B cell (primary cell): ENCODE measurements at regions of chr2 and their contacts with region 1.

Region 1: DNA sequence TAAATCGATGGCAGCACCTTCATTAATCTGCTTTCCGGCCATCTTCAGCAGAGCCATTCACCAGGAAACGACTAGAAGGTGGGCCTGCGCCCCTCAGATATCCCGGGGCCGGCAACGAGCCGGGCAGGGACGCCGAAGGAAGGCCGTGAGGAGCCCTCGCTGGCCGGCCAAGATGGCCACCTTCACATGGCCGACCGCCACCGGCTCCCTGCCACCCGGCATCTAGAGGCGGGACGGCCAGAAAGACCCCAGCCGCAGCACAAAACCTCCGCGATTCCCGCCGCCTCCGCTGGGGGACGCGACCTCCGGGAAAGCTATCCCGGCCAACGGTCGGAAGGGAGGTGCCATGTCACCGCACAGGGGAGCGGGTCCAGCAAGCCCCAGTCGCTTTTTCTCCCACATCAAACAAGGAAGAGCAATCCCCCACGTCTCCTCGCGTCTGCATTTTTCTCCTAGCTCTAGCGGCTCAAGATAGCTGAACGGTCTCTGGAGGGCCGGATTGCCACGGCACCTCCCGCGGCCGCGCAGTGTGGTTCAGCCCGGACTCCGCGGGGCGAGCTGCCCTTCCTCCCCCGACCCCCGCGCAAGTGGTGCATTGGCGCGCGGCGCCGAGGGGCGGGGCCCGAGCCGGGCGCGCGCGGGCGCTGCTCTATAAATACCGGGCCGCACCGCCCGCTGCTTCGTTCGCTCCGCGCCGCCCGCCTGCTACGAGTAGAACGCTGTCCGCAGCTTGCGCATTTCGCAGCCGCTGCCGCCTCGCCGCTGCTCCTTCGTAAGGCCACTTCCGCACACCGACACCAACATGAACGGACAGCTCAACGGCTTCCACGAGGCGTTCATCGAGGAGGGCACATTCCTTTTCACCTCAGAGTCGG is at the start of gene MAT2A:
- DNase-seq: peak; percentile 94
- ATAC-seq: peak; percentile 80
- H3K4me3 ChIP-seq: peak within 1 kb of the TSS; percentile 78 to 99 (median 92)
- H3K4me3 Mint-ChIP-seq: peak within 1 kb of the TSS; percentile 98
- H3K27ac ChIP-seq: peak within 1 kb of the TSS; percentile 81 to 89
- H3K27ac Mint-ChIP-seq: peak within 1 kb of the TSS; percentile 99
- H3K4me1 ChIP-seq: peaks cover 21 to 30% of the 10 kb centered on the region in 2 donors
- H3K4me1 Mint-ChIP-seq: peaks cover 37% of the 10 kb centered on the region
- H3K27me3 ChIP-seq: no peaks in the 10 kb centered on the region
- H3K27me3 Mint-ChIP-seq: no peaks in the 10 kb centered on the region
- CTCF ChIP-seq: peak; percentile 52
- total RNA-seq, gene MAT2A: 177 and 190 TPM in 2 replicates

Region 2: DNA sequence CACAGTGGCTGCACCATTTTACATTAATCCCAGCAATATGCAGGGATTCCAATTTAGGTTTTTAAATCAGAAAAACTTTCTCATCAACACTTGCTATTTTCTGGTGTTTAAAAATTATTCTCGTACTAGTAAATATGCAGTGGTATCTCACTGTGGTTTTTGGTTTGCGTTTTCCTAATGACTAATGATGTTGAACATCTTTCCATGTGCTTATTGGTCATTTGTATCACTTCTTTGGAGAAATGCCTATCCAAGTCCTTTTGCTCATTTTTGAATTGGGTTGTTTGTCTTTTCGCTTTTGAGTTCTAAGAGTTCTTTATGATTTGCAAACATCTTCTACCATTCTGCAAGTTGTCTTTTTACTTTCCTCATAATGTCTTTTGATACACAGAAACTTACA is 467.6 kb before region 1 on chr2:
- CTCF ChIA-PET with region 1: no interaction called
- POLR2A ChIA-PET with region 1: no interaction called
- intact Hi-C with region 1: no loop called
- DNase-seq: no peak
- ATAC-seq: no peak
- H3K4me3 ChIP-seq: no peak overlapping the region
- H3K4me3 Mint-ChIP-seq: no peak overlapping the region
- H3K27ac ChIP-seq: no peak overlapping the region
- H3K27ac Mint-ChIP-seq: no peak overlapping the region
- H3K4me1 ChIP-seq: peaks cover 7 to 9% of the 10 kb centered on the region in 2 donors
- H3K4me1 Mint-ChIP-seq: peaks cover 8% of the 10 kb centered on the region
- H3K27me3 ChIP-seq: peaks cover 0 to 18% (median 3%) of the 10 kb centered on the region in 4 experiments
- H3K27me3 Mint-ChIP-seq: peaks cover 22% of the 10 kb centered on the region
- CTCF ChIP-seq: no peak

Region 3: DNA sequence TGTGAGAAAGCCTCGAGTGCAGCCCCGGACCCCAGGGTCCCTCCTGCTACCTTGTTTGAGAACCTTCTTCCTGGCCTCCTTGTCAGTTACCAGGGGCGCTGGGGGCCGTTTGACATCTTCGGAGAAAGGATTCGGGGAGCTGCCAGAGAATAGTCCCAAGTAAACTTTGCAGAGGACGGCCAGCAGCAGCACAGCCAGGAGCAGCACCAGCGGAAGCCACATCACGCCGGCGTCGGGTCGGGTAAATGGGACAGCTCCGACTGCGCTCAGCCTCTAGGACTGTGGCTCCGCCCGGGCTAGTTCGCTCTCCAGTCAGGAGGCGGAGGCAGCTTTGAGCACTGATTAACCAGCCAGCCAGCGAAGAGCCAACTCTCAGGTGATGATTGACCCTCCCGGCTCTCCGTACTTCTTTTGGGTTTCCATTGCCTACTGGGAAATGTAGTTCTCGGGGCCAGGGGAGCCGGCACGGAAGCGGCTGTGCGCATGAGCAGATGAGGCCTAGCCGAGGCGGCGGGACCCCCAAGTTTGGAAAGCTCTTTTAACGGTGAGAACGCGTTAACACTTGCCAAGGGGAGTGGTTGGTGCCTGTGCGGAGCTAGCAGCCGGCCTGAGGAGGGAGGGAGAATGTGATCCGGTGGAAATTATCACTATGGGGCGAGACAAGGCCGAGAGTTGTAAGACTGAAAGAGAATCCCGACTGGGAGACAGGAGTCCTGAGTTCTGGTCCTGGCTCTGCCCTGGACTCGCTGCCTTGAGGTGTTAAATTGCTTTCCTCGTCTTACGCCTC is 184.2 kb before region 1 on chr2 and contains the starts of genes ELMOD3 and RETSAT:
- CTCF ChIA-PET with region 1: interaction called, 3 read pairs
- POLR2A ChIA-PET with region 1: interaction called, 7 read pairs
- intact Hi-C with region 1: loop called (anchors 1 kb)
- DNase-seq: peak; percentile 98
- ATAC-seq: peak; percentile 99
- H3K4me3 ChIP-seq: peak within 1 kb of the TSS; percentile 60 to 100 (median 85)
- H3K4me3 Mint-ChIP-seq: peak within 1 kb of the TSS; percentile 95
- H3K27ac ChIP-seq: peak within 1 kb of the TSS; percentile 81 to 95
- H3K27ac Mint-ChIP-seq: peak within 1 kb of the TSS; percentile 95
- H3K4me1 ChIP-seq: peaks cover 19 to 26% of the 10 kb centered on the region in 2 donors
- H3K4me1 Mint-ChIP-seq: peaks cover 40% of the 10 kb centered on the region
- H3K27me3 ChIP-seq: no peaks in the 10 kb centered on the region
- H3K27me3 Mint-ChIP-seq: no peaks in the 10 kb centered on the region
- CTCF ChIP-seq: no peak
- total RNA-seq, gene ELMOD3: 34.0 and 34.3 TPM in 2 replicates
- total RNA-seq, gene RETSAT: 23.8 and 28.1 TPM in 2 replicates

Region 4: GRCh38 chr2:85420536-85421259 is 118.0 kb before region 1 on chr2:
- CTCF ChIA-PET with region 1: interaction called, 21 read pairs
- POLR2A ChIA-PET with region 1: interaction called, 27 read pairs
- intact Hi-C with region 1: loop called (anchors 1 kb)
- DNase-seq: peak; percentile 91
- ATAC-seq: peak; percentile 77
- H3K4me3 ChIP-seq: peak overlapping the region in 3 of 5 experiments; percentile 18 to 33 (median 18)
- H3K4me3 Mint-ChIP-seq: peak overlapping the region; percentile 84
- H3K27ac ChIP-seq: peak overlapping the region in 1 of 2 donors; percentile 25
- H3K27ac Mint-ChIP-seq: peak overlapping the region; percentile 92
- H3K4me1 ChIP-seq: peaks cover 23 to 32% of the 10 kb centered on the region in 2 donors
- H3K4me1 Mint-ChIP-seq: peaks cover 28% of the 10 kb centered on the region
- H3K27me3 ChIP-seq: no peaks in the 10 kb centered on the region
- H3K27me3 Mint-ChIP-seq: no peaks in the 10 kb centered on the region
- CTCF ChIP-seq: peak; percentile 100

Region 5: DNA sequence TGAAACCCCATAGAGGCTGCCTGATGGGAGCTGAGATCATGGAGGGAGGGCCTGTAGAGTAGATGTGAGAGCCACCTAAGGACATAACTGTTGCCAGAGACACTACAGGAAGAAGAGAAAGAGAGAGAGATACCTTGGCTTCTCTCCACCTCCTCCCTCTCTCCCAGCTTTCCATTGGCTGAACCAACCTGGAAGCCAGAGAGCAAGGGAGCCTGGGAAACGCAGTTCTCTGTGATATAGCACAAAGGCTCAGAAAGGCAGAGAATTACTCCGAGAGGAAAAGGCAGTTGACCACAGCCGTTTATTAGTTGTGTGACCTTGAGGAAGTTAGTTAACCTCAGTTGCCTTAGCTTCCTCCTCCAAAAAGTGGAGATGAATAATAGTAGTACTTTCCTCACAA is 37.5 kb before region 1 on chr2:
- CTCF ChIA-PET with region 1: no interaction called
- POLR2A ChIA-PET with region 1: no interaction called
- intact Hi-C with region 1: no loop called
- DNase-seq: no peak
- ATAC-seq: no peak
- H3K4me3 ChIP-seq: no peak overlapping the region
- H3K4me3 Mint-ChIP-seq: no peak overlapping the region
- H3K27ac ChIP-seq: no peak overlapping the region
- H3K27ac Mint-ChIP-seq: no peak overlapping the region
- H3K4me1 ChIP-seq: peaks cover 6 to 15% of the 10 kb centered on the region in 2 donors
- H3K4me1 Mint-ChIP-seq: peaks cover 13% of the 10 kb centered on the region
- H3K27me3 ChIP-seq: no peaks in the 10 kb centered on the region
- H3K27me3 Mint-ChIP-seq: no peaks in the 10 kb centered on the region
- CTCF ChIP-seq: no peak

Region 6: GRCh38 chr2:85561317-85561979 is 22.7 kb after region 1 on chr2 and contains the start of gene GGCX:
- CTCF ChIA-PET with region 1: no interaction called
- POLR2A ChIA-PET with region 1: interaction called, 19 read pairs
- intact Hi-C with region 1: loop called (anchors 1 kb)
- DNase-seq: peak; percentile 96
- ATAC-seq: peak; percentile 91
- H3K4me3 ChIP-seq: peak within 1 kb of the TSS; percentile 60 to 96 (median 88)
- H3K4me3 Mint-ChIP-seq: peak within 1 kb of the TSS; percentile 99
- H3K27ac ChIP-seq: peak within 1 kb of the TSS; percentile 73 to 90
- H3K27ac Mint-ChIP-seq: peak within 1 kb of the TSS; percentile 99
- H3K4me1 ChIP-seq: peaks cover 20 to 28% of the 10 kb centered on the region in 2 donors
- H3K4me1 Mint-ChIP-seq: peaks cover 30% of the 10 kb centered on the region
- H3K27me3 ChIP-seq: no peaks in the 10 kb centered on the region
- H3K27me3 Mint-ChIP-seq: no peaks in the 10 kb centered on the region
- CTCF ChIP-seq: no peak
- total RNA-seq, gene GGCX: 33.0 and 36.8 TPM in 2 replicates

Region 7: GRCh38 chr2:85611705-85612587 is 73.2 kb after region 1 on chr2 and contains the start of gene C2orf68:
- CTCF ChIA-PET with region 1: no interaction called
- POLR2A ChIA-PET with region 1: interaction called, 5 read pairs
- intact Hi-C with region 1: loop called (anchors 1 kb)
- DNase-seq: peak; percentile 89
- ATAC-seq: peak; percentile 66
- H3K4me3 ChIP-seq: peak within 1 kb of the TSS; percentile 72 to 88 (median 76)
- H3K4me3 Mint-ChIP-seq: peak within 1 kb of the TSS; percentile 98
- H3K27ac ChIP-seq: peak within 1 kb of the TSS; percentile 34 to 83
- H3K27ac Mint-ChIP-seq: peak within 1 kb of the TSS; percentile 95
- H3K4me1 ChIP-seq: peaks cover 13 to 29% of the 10 kb centered on the region in 2 donors
- H3K4me1 Mint-ChIP-seq: peaks cover 33% of the 10 kb centered on the region
- H3K27me3 ChIP-seq: no peaks in the 10 kb centered on the region
- H3K27me3 Mint-ChIP-seq: no peaks in the 10 kb centered on the region
- CTCF ChIP-seq: no peak
- total RNA-seq, gene C2orf68: 82.4 and 90.1 TPM in 2 replicates

Region 8: DNA sequence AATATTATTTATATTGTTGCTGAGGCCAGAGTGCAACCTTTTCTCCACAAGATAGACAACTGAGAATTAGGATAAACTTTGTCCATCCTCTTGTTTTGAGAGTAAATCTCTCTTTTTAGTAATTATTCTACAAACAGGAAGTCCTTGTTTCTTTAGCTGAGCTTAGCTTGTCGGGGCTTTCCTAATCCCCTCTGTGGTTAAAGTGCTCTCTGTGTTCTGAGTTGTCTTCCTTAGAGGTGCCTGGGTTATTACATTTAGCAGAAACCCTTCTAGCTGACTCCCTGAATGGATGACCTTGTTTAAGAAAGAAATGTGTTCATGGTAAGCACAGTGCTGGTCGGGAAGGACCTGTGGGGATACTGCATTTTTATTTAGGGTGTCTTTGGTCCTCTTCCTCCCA is 89.9 kb after region 1 on chr2:
- CTCF ChIA-PET with region 1: no interaction called
- POLR2A ChIA-PET with region 1: no interaction called
- intact Hi-C with region 1: no loop called
- DNase-seq: peak; percentile 32
- ATAC-seq: peak; percentile 67
- H3K4me3 ChIP-seq: no peak overlapping the region
- H3K4me3 Mint-ChIP-seq: no peak overlapping the region
- H3K27ac ChIP-seq: peak overlapping the region in 1 of 2 donors; percentile 67
- H3K27ac Mint-ChIP-seq: peak overlapping the region; percentile 66
- H3K4me1 ChIP-seq: peaks cover 7% of the 10 kb centered on the region in 2 donors
- H3K4me1 Mint-ChIP-seq: peaks cover 10% of the 10 kb centered on the region
- H3K27me3 ChIP-seq: no peaks in the 10 kb centered on the region
- H3K27me3 Mint-ChIP-seq: no peaks in the 10 kb centered on the region
- CTCF ChIP-seq: no peak